ENCODE measurements at regions of chr6 and their contacts with region 1.

Region 1: DNA sequence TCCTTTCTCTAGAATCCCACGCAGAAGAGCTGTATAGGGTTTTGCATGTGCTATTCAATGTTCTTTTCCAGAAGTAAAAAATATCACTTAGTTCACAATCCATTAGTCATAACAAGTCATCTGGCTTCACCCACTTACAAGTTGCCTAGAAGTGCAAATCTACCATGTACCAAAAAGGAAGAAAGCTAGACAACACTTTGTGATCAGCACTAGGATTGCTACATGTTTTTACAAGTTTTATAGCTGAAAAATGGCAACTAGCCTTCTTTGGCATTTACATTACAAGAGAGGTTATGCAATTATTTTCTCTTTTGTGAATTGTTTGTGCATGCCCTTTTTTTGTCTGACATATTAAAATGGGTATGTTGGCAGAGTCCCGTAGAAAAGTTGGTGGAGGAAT is 85.6 kb upstream of the PTPRK start:
- DNase-seq: peak; percentile 92
- H3K4me3 ChIP-seq: no peak overlapping the region
- H3K27ac ChIP-seq: peak overlapping the region; percentile 55
- H3K4me1 ChIP-seq: peaks cover 24% of the 10 kb centered on the region
- H3K27me3 ChIP-seq: no peaks in the 10 kb centered on the region
- CTCF ChIP-seq: no peak

Region 2: GRCh38 chr6:128630182-128630581 is 24.2 kb after region 1 on chr6:
- CTCF ChIA-PET with region 1: no interaction called
- dilution Hi-C with region 1: no loop called
- in situ Hi-C with region 1: no loop called
- intact Hi-C with region 1: loop called (anchors 2 kb)
- DNase-seq: peak; percentile 86
- H3K4me3 ChIP-seq: no peak overlapping the region
- H3K27ac ChIP-seq: no peak overlapping the region
- H3K4me1 ChIP-seq: peaks cover 21% of the 10 kb centered on the region
- H3K27me3 ChIP-seq: no peaks in the 10 kb centered on the region
- CTCF ChIP-seq: peak in 1 of 2 donors; percentile 29

Region 3: DNA sequence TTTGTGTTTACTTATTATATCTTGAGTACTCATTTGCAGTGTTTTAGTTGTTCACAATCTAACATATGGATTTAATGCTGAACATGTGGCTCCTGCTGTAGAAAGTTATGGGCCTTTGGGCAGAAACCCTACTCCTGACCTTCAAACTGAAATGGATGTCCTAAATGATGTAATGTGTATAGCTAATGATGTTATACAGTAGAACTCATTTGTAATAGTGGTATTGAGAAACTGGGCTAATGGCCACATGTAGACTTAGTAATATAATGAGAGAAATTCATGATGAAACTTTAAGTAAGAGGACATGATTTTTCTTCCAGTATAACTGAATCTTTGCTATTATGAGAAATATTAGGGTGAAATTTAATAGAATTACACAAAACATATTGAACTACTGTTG is 35.7 kb after region 1 on chr6:
- CTCF ChIA-PET with region 1: no interaction called
- dilution Hi-C with region 1: no loop called
- in situ Hi-C with region 1: no loop called
- intact Hi-C with region 1: loop called (anchors 5 kb)
- DNase-seq: no peak
- H3K4me3 ChIP-seq: no peak overlapping the region
- H3K27ac ChIP-seq: no peak overlapping the region
- H3K4me1 ChIP-seq: no peaks in the 10 kb centered on the region
- H3K27me3 ChIP-seq: no peaks in the 10 kb centered on the region
- CTCF ChIP-seq: no peak

Measured in mammary epithelial cell (primary cell).